Heart right ventricle (tissue), 16 donors: ENCODE measurements at regions of chr9 and their contacts with region 1.

Region 1: GRCh38 chr9:89878687-89879086 is 273.9 kb downstream of the GADD45G start:
- DNase-seq: peak; percentile 80
- ATAC-seq: peak; percentile 59 to 92 (median 86)
- H3K4me3 ChIP-seq: no peak overlapping the region
- H3K27ac ChIP-seq: peak overlapping the region; percentile 64 to 89 (median 80)
- H3K4me1 ChIP-seq: peaks cover 11 to 61% (median 46%) of the 10 kb centered on the region in 9 donors
- H3K27me3 ChIP-seq: no peaks in the 10 kb centered on the region
- CTCF ChIP-seq: no peak

Region 2: GRCh38 chr9:89623925-89624420 is 254.7 kb before region 1 on chr9:
- intact Hi-C with region 1: loop called in 1 of 10 experiments (anchors 5 kb)
- DNase-seq: peak in 1 of 2 donors; percentile 50
- ATAC-seq: peak; percentile 27 to 88 (median 68)
- H3K4me3 ChIP-seq: no peak overlapping the region
- H3K27ac ChIP-seq: peak overlapping the region; percentile 25 to 88 (median 56)
- H3K4me1 ChIP-seq: peaks cover 8 to 42% (median 28%) of the 10 kb centered on the region in 9 donors
- H3K27me3 ChIP-seq: peaks cover 0 to 6% (median 0%) of the 10 kb centered on the region in 7 donors
- CTCF ChIP-seq: peak in 4 of 9 donors; percentile 26 to 35 (median 30)

Region 3: GRCh38 chr9:89675058-89675742 is 203.5 kb before region 1 on chr9:
- intact Hi-C with region 1: loop called in 1 of 10 experiments (anchors 5 kb)
- DNase-seq: peak; percentile 62 to 70
- ATAC-seq: peak; percentile 74 to 88 (median 86)
- H3K4me3 ChIP-seq: no peak overlapping the region
- H3K27ac ChIP-seq: peak overlapping the region in 8 of 10 donors; percentile 15 to 79 (median 49)
- H3K4me1 ChIP-seq: peaks cover 0 to 34% (median 20%) of the 10 kb centered on the region in 9 donors
- H3K27me3 ChIP-seq: no peaks in the 10 kb centered on the region
- CTCF ChIP-seq: no peak

Region 4: DNA sequence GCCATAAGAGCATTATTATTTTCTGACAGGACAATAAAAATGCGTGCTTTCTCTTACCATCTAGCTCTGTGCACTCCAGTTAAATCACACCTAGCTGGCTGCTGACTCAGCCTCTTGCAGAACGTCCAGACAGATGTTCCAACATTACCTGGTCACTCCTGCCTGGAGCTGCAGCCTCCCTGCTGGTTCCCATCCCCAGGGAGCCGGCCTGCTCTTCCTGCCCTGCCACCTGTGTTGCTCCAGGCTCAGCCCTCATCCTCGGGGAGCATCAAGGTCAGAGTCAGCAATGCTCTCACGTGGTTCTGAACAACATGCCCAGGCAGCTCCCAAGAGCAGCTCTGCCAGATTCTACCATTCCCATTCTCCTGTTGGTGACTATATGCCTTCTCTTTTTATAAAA is 192.6 kb before region 1 on chr9:
- intact Hi-C with region 1: loop called in 1 of 10 experiments (anchors 2 kb)
- DNase-seq: no peak
- ATAC-seq: peak in 6 of 8 donors; percentile 16 to 69 (median 36)
- H3K4me3 ChIP-seq: no peak overlapping the region
- H3K27ac ChIP-seq: peak overlapping the region in 5 of 10 donors; percentile 73 to 79 (median 78)
- H3K4me1 ChIP-seq: peaks cover 7 to 30% (median 23%) of the 10 kb centered on the region in 9 donors
- H3K27me3 ChIP-seq: no peaks in the 10 kb centered on the region
- CTCF ChIP-seq: no peak

Region 5: GRCh38 chr9:89750147-89750861 is 128.4 kb before region 1 on chr9:
- intact Hi-C with region 1: loop called in 4 of 10 experiments (anchors 5 to 10 kb)
- DNase-seq: peak; percentile 56 to 63
- ATAC-seq: peak; percentile 62 to 80 (median 74)
- H3K4me3 ChIP-seq: no peak overlapping the region
- H3K27ac ChIP-seq: no peak overlapping the region
- H3K4me1 ChIP-seq: peaks cover 0 to 36% (median 12%) of the 10 kb centered on the region in 9 donors
- H3K27me3 ChIP-seq: no peaks in the 10 kb centered on the region
- CTCF ChIP-seq: no peak

Region 6: DNA sequence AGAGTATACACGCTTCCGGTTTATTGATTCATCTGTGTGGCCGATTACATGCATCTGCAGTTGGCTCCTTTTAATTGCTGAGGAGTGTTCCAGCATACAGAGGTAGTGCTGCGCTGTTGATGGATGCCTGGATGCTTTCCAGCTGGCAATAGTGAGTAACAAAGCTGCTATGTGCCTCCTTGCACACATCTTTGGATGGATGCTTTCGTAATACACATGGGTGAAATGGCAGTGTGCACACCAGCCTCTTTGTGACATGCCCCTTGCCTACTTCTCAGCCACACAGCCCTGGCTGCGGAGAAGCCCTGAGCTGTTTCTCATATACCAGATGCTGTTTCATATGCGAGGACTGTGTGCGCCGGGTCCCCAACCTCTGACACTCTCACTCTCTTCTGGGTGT is 122.9 kb before region 1 on chr9:
- intact Hi-C with region 1: loop called in 4 of 10 experiments (anchors 5 to 10 kb)
- DNase-seq: peak in 1 of 2 donors; percentile 62
- ATAC-seq: peak in 7 of 8 donors; percentile 42 to 84 (median 66)
- H3K4me3 ChIP-seq: no peak overlapping the region
- H3K27ac ChIP-seq: no peak overlapping the region
- H3K4me1 ChIP-seq: peaks cover 0 to 21% (median 8%) of the 10 kb centered on the region in 9 donors
- H3K27me3 ChIP-seq: no peaks in the 10 kb centered on the region
- CTCF ChIP-seq: no peak

Region 7: DNA sequence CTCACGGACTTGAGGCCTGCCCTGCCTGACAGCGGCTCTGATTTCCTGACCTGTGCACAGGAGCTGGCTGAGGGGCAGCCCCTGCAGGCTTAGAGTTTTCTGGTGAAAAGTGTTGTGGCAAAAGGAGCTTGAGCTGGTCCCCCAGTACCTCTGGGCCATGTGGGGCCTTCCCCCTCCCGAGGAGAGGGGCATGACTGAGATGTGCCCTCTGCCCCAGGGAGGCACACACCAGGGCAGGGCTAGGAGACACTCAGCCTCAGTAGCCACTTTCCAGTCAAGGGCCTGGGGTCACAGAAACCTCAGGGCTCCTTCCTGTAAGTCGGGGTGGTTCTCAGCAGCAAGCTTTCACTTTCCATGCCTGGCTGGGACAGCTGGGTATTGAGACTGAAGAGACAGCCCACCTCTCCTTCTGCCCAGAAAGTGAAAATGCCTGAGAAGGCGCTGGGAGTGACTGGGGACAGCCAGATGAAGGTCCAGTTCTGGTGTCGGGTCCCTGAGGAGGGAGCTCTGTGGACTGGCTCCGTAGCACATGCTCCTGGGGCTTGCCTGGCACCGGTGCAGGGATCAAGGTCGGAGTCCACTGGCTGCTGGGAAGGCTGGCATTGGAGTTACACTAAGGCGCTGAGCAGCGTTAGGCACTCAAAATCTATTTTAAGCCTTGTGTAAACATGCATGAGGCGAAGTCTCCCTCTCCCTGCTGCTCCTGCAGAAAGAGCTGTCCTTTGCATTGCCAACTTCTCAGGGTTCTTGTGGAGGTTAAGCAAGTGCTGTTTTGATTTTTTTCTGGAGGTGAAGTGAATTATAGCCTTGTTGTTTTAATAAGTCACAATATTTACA is 121.1 kb after region 1 on chr9:
- intact Hi-C with region 1: loop called in 2 of 10 experiments (anchors 5 to 10 kb)
- DNase-seq: peak; percentile 76 to 81
- ATAC-seq: peak; percentile 82 to 95 (median 92)
- H3K4me3 ChIP-seq: peak overlapping the region in 9 of 10 donors; percentile 10 to 34 (median 17)
- H3K27ac ChIP-seq: peak overlapping the region; percentile 71 to 91 (median 88)
- H3K4me1 ChIP-seq: peaks cover 23 to 64% (median 50%) of the 10 kb centered on the region in 9 donors
- H3K27me3 ChIP-seq: no peaks in the 10 kb centered on the region
- CTCF ChIP-seq: peak in 2 of 9 donors; percentile 35 to 37